ENCODE measurements at regions of chr11 and their contacts with region 1.

Region 1: DNA sequence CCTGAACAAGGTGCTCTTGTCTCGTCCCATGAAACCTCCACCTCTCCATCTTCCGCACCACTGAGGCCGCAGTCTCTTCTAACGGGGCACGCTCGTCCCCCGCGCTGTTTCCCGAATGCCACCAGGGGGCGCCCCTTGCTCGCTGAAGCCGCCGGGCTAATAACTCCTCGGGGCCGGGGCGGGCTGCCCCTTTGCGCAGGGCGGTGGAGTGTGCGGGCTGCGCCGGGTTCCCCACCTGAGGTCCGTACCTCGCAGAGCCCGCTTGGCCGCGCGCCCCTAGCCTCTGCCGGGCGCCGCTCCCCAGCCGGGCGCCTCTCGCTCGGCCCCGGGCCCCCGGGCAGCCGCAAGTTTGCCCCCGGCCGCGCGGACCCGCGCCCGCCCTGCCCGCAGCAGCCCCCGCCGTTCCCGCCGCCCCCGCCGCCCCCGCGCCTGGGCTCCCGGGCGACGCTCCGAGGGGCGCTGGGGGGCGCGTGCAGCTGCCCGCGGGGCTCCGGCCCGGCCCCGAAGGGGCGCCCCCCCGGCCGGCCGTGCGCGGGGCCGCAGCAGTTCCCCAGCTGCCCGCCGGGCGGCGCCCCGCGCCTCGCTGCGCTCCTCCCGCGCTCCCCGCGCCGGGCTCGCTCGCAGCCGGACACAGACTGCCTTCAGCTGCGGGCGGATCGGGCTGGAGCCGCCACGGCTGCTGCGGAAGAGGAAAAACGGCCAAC is at the start of gene GRIK4:
- DNase-seq: peak; percentile 36 to 84 (median 59)
- ATAC-seq: peak; percentile 88
- H3K4me3 ChIP-seq: no peak within 1 kb of the TSS
- H3K4me3 Mint-ChIP-seq: peak within 1 kb of the TSS in 9 of 10 donors; percentile 39 to 68 (median 64)
- H3K27ac ChIP-seq: no peak within 1 kb of the TSS
- H3K27ac Mint-ChIP-seq: no peak within 1 kb of the TSS
- H3K4me1 ChIP-seq: no peaks in the 10 kb centered on the region
- H3K4me1 Mint-ChIP-seq: peaks cover 0 to 9% (median 3%) of the 10 kb centered on the region in 7 donors
- H3K27me3 ChIP-seq: peaks cover 0 to 7% of the 10 kb centered on the region in 2 donors
- H3K27me3 Mint-ChIP-seq: peaks cover 69 to 85% (median 80%) of the 10 kb centered on the region in 5 donors
- total RNA-seq, gene GRIK4: 0.93 to 3.8 TPM in 2 of 5 experiments, not detected in the others

Region 2: GRCh38 chr11:120281143-120281795 is 230.0 kb before region 1 on chr11:
- CTCF ChIA-PET with region 1: no interaction called
- POLR2A ChIA-PET with region 1: no interaction called
- intact Hi-C with region 1: no loop called
- DNase-seq: no peak
- ATAC-seq: no peak
- H3K4me3 ChIP-seq: no peak overlapping the region
- H3K4me3 Mint-ChIP-seq: no peak overlapping the region
- H3K27ac ChIP-seq: no peak overlapping the region
- H3K27ac Mint-ChIP-seq: no peak overlapping the region
- H3K4me1 ChIP-seq: no peaks in the 10 kb centered on the region
- H3K4me1 Mint-ChIP-seq: no peaks in the 10 kb centered on the region
- H3K27me3 ChIP-seq: no peaks in the 10 kb centered on the region
- H3K27me3 Mint-ChIP-seq: peaks cover 0 to 22% (median under 1%) of the 10 kb centered on the region in 5 donors

Region 3: GRCh38 chr11:120682866-120683265 is 171.6 kb after region 1 on chr11:
- CTCF ChIA-PET with region 1: no interaction called
- POLR2A ChIA-PET with region 1: no interaction called
- intact Hi-C with region 1: loop called in 1 of 2 experiments (anchors 1 kb)
- DNase-seq: no peak
- ATAC-seq: no peak
- H3K4me3 ChIP-seq: no peak overlapping the region
- H3K4me3 Mint-ChIP-seq: no peak overlapping the region
- H3K27ac ChIP-seq: no peak overlapping the region
- H3K27ac Mint-ChIP-seq: no peak overlapping the region
- H3K4me1 ChIP-seq: no peaks in the 10 kb centered on the region
- H3K4me1 Mint-ChIP-seq: peaks cover 0 to 1% (median 0%) of the 10 kb centered on the region in 7 donors
- H3K27me3 ChIP-seq: no peaks in the 10 kb centered on the region
- H3K27me3 Mint-ChIP-seq: peaks cover 7 to 49% (median 30%) of the 10 kb centered on the region in 5 donors

Region 4: DNA sequence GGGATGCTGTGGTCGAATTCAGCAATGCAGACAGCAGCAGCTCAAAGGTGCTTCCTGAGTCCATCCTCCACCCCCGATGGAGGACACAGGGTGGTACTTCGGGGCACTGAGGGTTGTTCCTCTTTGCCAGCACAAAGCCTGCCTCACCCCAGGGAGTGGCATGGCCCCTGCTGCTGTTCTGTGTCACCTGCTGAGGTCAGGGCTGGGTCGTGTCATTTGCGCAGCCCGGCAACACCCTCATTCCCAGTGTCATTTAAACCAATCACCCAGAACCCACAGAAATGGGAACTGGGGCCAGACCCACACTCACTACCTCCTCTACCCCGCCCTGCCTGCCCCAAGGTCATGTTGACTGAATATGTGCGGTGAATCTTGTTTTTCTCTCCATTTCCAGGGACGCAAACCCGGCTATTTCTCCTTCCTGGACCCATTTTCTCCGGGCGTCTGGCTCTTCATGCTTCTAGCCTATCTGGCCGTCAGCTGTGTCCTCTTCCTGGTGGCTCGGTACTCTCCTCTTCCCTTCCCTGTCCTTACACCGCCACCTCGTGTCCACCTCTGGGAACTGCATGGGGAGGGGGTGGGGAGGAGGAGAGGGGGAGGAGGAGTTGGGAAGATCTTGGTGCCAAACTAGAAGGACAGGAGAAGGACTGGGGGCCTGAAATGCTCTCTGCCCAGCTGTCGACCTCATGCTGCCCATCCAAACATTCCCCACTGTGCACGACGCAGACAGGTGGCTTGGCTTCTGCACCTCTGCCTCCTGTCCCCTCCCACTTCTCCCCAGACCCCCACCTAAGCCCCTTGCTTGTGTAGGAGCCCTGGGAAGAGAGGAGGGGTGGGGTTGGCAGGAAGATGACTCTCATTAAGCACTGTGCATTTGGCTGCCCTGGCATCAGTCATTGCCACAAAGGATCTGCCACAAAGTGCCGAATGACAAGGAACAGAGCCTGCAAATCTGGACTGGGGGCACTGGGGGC is 441.5 kb after region 1 on chr11:
- CTCF ChIA-PET with region 1: no interaction called
- POLR2A ChIA-PET with region 1: no interaction called
- intact Hi-C with region 1: loop called in 1 of 2 experiments (anchors 1 kb)
- DNase-seq: peak; percentile 21 to 64 (median 46)
- ATAC-seq: peak; percentile 81
- H3K4me3 ChIP-seq: peak overlapping the region; percentile 50
- H3K4me3 Mint-ChIP-seq: peak overlapping the region; percentile 74 to 87 (median 82)
- H3K27ac ChIP-seq: no peak overlapping the region
- H3K27ac Mint-ChIP-seq: peak overlapping the region in 1 of 9 donors; percentile 56
- H3K4me1 ChIP-seq: peaks cover 0 to 12% of the 10 kb centered on the region in 2 donors
- H3K4me1 Mint-ChIP-seq: peaks cover 10 to 25% (median 18%) of the 10 kb centered on the region in 7 donors
- H3K27me3 ChIP-seq: peaks cover 0 to 3% of the 10 kb centered on the region in 2 donors
- H3K27me3 Mint-ChIP-seq: peaks cover 14 to 32% (median 31%) of the 10 kb centered on the region in 5 donors

Region 5: GRCh38 chr11:121112498-121113455 is 601.5 kb after region 1 on chr11:
- CTCF ChIA-PET with region 1: no interaction called
- POLR2A ChIA-PET with region 1: no interaction called
- intact Hi-C with region 1: loop called in 1 of 2 experiments (anchors 2 kb)
- DNase-seq: peak in 6 of 9 donors; percentile 1 to 43 (median 30)
- ATAC-seq: peak; percentile 72
- H3K4me3 ChIP-seq: no peak overlapping the region
- H3K4me3 Mint-ChIP-seq: no peak overlapping the region
- H3K27ac ChIP-seq: no peak overlapping the region
- H3K27ac Mint-ChIP-seq: no peak overlapping the region
- H3K4me1 ChIP-seq: no peaks in the 10 kb centered on the region
- H3K4me1 Mint-ChIP-seq: peaks cover 0 to 5% (median 0%) of the 10 kb centered on the region in 7 donors
- H3K27me3 ChIP-seq: no peaks in the 10 kb centered on the region
- H3K27me3 Mint-ChIP-seq: peaks cover 5 to 32% (median 15%) of the 10 kb centered on the region in 5 donors

Region 6: DNA sequence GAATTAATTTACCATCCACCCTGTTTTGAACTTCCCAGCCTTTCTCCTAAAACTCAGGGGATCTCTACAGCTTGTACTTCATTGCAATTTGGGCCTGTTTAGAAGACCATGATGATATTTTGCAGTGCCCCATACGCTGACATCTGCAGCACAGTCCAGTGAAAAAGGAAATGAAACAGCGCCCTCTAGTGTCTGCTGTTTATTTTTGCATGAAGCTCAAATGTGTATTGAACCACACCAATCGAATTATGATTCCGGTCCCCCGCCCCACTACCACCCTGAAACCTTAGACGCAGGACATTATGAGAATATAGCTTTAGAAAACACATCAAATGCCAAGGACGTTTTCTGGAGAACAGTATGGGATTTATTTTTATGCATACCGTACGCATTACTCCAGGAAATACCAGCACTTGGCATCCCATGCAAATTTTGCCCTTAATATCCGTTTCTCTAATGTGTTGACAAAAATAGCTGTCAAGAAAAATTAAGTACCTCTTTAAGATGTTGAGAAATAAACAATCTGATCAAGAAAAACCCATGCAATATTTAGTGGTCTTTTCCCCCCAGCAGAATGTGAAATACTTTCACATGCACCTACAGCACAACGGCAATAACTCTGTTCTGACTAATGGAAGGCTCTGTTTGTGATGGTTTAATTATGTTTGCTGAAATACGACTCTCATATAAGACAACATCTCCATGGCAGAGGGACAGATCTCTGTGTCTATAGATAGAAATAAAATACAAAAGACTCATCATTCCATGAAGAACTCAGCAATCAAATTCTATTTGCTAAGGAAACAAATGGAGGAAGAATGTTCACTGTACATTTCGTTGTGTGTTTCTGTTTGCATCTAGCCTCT is 683.7 kb after region 1 on chr11:
- CTCF ChIA-PET with region 1: no interaction called
- POLR2A ChIA-PET with region 1: no interaction called
- intact Hi-C with region 1: loop called in 1 of 2 experiments (anchors 1 kb)
- DNase-seq: peak; percentile 13 to 67 (median 50)
- ATAC-seq: peak; percentile 85
- H3K4me3 ChIP-seq: no peak overlapping the region
- H3K4me3 Mint-ChIP-seq: no peak overlapping the region
- H3K27ac ChIP-seq: no peak overlapping the region
- H3K27ac Mint-ChIP-seq: no peak overlapping the region
- H3K4me1 ChIP-seq: no peaks in the 10 kb centered on the region
- H3K4me1 Mint-ChIP-seq: peaks cover 0 to 8% (median 0%) of the 10 kb centered on the region in 7 donors
- H3K27me3 ChIP-seq: peaks cover 0 to 5% of the 10 kb centered on the region in 2 donors
- H3K27me3 Mint-ChIP-seq: peaks cover 21 to 35% (median 25%) of the 10 kb centered on the region in 5 donors

Region 7: GRCh38 chr11:122505304-122506006 is 1994.2 kb after region 1 on chr11:
- CTCF ChIA-PET with region 1: no interaction called
- POLR2A ChIA-PET with region 1: no interaction called
- intact Hi-C with region 1: loop called in 1 of 2 experiments (anchors 5 kb)
- DNase-seq: peak in 8 of 9 donors; percentile 0 to 51 (median 18)
- ATAC-seq: peak; percentile 78
- H3K4me3 ChIP-seq: no peak overlapping the region
- H3K4me3 Mint-ChIP-seq: no peak overlapping the region
- H3K27ac ChIP-seq: no peak overlapping the region
- H3K27ac Mint-ChIP-seq: no peak overlapping the region
- H3K4me1 ChIP-seq: no peaks in the 10 kb centered on the region
- H3K4me1 Mint-ChIP-seq: peaks cover 0 to 4% (median 0%) of the 10 kb centered on the region in 7 donors
- H3K27me3 ChIP-seq: no peaks in the 10 kb centered on the region
- H3K27me3 Mint-ChIP-seq: peaks cover 10 to 58% (median 44%) of the 10 kb centered on the region in 5 donors

Measured in naive thymus-derived CD4-positive, alpha-beta T cell (primary cell).